H1 (cell line): ENCODE measurements at regions of chr15 and their contacts with region 1.

Region 1: DNA sequence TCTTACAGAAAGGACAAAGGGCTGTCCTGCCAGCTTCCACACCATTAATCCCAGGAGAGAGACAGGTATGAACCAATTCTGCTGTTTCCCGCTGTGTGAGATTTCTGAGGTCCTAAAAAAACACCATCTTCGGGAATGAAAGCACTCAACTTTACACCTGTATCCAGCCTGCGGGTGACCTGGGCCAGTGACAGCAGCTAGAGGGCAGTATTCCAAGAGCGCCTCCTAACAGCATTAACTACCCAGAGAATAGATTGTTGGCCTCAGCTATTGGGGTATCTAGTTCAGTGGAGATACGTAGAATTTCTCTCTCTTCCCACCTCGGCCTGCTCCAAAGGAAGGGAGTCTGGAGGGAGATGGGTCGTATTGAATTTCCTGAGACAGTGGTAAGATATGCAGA is 55.1 kb downstream of the WDR76 start:
- DNase-seq: peak in 1 of 2 experiments; percentile 67
- H3K4me3 ChIP-seq: no peak overlapping the region
- H3K27ac ChIP-seq: no peak overlapping the region
- H3K4me1 ChIP-seq: peaks cover 0 to 13% (median 5%) of the 10 kb centered on the region in 4 experiments; a peak in 3 of 7 replicates
- H3K27me3 ChIP-seq: no peaks in the 10 kb centered on the region
- CTCF ChIP-seq: peak; percentile 79 to 90 (median 88)
- EP300 ChIP-seq: no peak
- POLR2A ChIP-seq: 0 out of 3 replicates have a peak, but pooled peaks of 1 of the 2 experiments have one; percentile 17
- RAD21 ChIP-seq: peak; percentile 55 to 62

Region 2: DNA sequence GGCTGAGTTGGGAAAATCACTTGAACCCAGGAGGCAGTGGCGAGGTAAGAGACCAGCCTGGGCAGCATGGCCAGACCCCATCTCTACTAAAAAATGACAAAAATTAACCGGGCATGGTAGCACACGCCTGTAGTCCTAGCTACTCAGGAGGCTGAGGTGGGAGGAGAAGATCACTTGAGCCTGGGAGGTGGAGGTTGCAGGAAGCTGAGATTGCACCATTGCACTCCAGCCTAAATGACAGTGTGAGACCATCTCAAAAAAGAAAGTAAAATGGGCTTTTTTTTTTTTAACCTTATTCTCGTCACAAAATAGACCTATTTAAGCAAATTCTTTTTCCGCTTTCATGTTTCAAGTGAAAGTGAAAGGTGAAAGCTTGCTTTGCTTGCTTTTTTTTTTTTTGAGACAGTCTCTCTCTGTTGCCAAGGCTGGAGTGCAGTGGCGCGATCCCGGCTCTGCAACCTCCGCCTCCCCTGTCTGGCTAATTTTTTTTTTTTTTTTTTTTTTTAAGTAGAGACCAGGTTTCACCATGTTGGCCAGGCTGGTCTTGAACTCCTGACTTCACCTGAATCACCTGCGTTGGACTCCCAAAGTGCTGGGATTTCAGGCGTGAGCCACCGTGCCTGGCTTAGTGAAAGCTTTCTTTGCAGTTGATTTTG is 132.1 kb before region 1 on chr15:
- CTCF ChIA-PET with region 1: no interaction called
- POLR2A ChIA-PET with region 1: no interaction called
- DNase-seq: no peak
- H3K4me3 ChIP-seq: no peak overlapping the region
- H3K27ac ChIP-seq: no peak overlapping the region
- H3K4me1 ChIP-seq: peaks cover 0 to 6% (median 2%) of the 10 kb centered on the region in 4 experiments; a peak in 6 of 7 replicates
- H3K27me3 ChIP-seq: no peaks in the 10 kb centered on the region
- CTCF ChIP-seq: no peak
- EP300 ChIP-seq: no peak
- POLR2A ChIP-seq: no peak
- RAD21 ChIP-seq: no peak

Region 3: GRCh38 chr15:43893956-43894355 is 12.0 kb after region 1 on chr15:
- CTCF ChIA-PET with region 1: interaction called, 54 read pairs
- POLR2A ChIA-PET with region 1: interaction called, 3 read pairs
- DNase-seq: no peak
- H3K4me3 ChIP-seq: no peak overlapping the region
- H3K27ac ChIP-seq: no peak overlapping the region
- H3K4me1 ChIP-seq: peaks cover 0 to 2% (median 0%) of the 10 kb centered on the region in 4 experiments; a peak in 1 of 7 replicates
- H3K27me3 ChIP-seq: no peaks in the 10 kb centered on the region
- CTCF ChIP-seq: no peak
- EP300 ChIP-seq: no peak
- POLR2A ChIP-seq: no peak
- RAD21 ChIP-seq: no peak

Region 4: DNA sequence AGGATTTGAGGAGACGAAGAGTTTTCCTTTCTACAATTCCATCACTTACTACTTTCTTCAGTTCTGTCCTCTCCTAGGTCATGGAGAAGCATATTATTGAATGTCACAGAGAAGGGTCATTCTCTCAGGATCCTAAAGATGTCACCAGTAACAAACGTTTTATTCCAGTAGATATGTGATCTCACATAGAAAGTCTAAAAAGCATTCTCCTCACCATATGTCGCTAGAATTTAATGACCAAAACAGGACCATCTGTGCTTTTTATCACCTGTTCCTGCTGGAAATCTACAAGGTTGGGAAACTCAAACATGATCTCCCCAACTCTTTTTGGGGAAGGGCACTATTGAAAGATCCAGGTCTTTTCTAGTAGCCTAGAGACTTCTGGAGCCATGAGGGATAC is 337.1 kb after region 1 on chr15:
- CTCF ChIA-PET with region 1: interaction called, 20 read pairs
- POLR2A ChIA-PET with region 1: no interaction called
- DNase-seq: no peak
- H3K4me3 ChIP-seq: no peak overlapping the region
- H3K27ac ChIP-seq: no peak overlapping the region
- H3K4me1 ChIP-seq: peaks cover 0 to 5% (median 2%) of the 10 kb centered on the region in 4 experiments; a peak in 2 of 7 replicates
- H3K27me3 ChIP-seq: no peaks in the 10 kb centered on the region
- CTCF ChIP-seq: no peak
- EP300 ChIP-seq: no peak
- POLR2A ChIP-seq: no peak
- RAD21 ChIP-seq: no peak